ENCODE measurements at regions of chr6 and their contacts with region 1.

Region 1: DNA sequence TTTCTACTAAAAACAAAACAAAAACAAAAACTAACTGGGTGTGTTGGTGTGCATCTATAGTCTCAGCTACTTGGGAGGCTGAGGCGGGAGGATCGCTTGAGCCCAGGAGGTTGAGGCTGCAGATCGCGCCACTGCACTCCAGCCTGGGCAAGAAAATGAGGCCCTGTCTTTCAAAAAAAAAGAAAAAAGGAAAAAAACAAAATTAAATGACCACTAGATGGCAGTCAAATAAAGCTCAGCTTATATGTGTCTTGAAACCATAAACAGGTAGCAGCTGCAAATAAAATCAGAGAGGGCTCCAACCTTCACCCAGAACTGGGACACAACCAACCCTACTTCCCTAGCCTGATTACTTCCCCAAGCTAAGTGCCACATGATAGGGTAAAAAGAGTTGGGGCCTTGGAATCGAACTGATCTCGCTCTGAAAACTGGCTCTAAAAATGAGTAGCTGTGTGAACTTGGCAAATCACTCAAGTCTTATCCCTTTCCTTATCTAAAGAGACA is 67.1 kb upstream of the ADGRF4 start:
- DNase-seq: peak in 2 of 9 experiments; percentile 41 to 57
- ATAC-seq: peak; percentile 59
- H3K4me3 ChIP-seq: no peak overlapping the region
- H3K4me3 Mint-ChIP-seq: no peak overlapping the region
- H3K27ac ChIP-seq: no peak overlapping the region
- H3K27ac Mint-ChIP-seq: peak overlapping the region; percentile 19
- H3K4me1 ChIP-seq: peaks cover 9% of the 10 kb centered on the region
- H3K4me1 Mint-ChIP-seq: peaks cover 23% of the 10 kb centered on the region
- H3K27me3 ChIP-seq: no peaks in the 10 kb centered on the region
- H3K27me3 Mint-ChIP-seq: no peaks in the 10 kb centered on the region
- CTCF ChIP-seq: peak; percentile 67

Region 2: GRCh38 chr6:47392251-47392650 is 239.1 kb before region 1 on chr6:
- CTCF ChIA-PET with region 1: no interaction called
- POLR2A ChIA-PET with region 1: no interaction called
- intact Hi-C with region 1: no loop called
- DNase-seq: no peak
- ATAC-seq: no peak
- H3K4me3 ChIP-seq: no peak overlapping the region
- H3K4me3 Mint-ChIP-seq: no peak overlapping the region
- H3K27ac ChIP-seq: no peak overlapping the region
- H3K27ac Mint-ChIP-seq: no peak overlapping the region
- H3K4me1 ChIP-seq: no peaks in the 10 kb centered on the region
- H3K4me1 Mint-ChIP-seq: no peaks in the 10 kb centered on the region
- H3K27me3 ChIP-seq: peaks cover 0 to 4% of the 10 kb centered on the region in 2 experiments
- H3K27me3 Mint-ChIP-seq: peaks cover 3% of the 10 kb centered on the region
- CTCF ChIP-seq: no peak

Region 3: DNA sequence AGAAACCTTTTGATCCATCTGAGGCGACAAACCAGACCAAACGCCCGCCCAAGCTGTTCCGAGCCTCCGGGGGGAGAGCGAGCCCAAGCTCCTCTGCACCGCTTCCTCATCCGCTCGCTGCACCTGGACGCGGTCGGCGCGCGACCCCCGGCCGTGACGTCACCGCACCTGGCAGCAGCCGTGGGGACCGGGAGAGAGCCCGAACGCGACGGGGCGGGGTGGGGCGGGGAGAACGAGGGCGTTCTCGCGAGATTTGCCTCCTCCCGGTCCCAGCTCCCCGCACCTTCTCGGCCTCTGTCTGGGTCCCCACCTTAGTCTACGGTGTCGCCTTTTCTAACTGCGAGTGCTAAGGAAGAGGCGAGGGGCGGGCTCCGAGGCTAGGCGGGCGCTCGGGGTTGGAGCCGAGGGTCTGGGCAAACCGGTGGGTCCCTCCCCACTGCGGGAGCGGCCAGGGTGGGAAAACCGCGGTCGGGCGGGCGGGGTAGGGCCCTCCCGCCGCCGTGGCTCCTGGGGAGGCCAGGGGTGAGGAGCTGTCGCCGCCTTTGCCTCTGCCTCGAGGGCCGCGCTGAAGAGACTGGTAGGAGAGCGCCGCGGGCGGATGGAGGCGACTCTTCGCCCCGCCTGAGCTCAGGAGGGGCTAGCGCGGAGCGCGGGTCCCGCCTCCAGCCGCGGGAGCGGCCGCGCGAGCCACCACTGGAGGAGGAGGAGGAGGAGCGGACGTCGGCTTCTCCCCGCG is 153.7 kb before region 1 on chr6 and contains the start of gene CD2AP:
- CTCF ChIA-PET with region 1: no interaction called
- POLR2A ChIA-PET with region 1: no interaction called
- intact Hi-C with region 1: loop called in 1 of 2 experiments (anchors 5 kb)
- DNase-seq: peak; percentile 86 to 97 (median 94)
- ATAC-seq: peak; percentile 82
- H3K4me3 ChIP-seq: peak within 1 kb of the TSS; percentile 68 to 76
- H3K4me3 Mint-ChIP-seq: peak within 1 kb of the TSS; percentile 97
- H3K27ac ChIP-seq: peak within 1 kb of the TSS; percentile 89 to 94
- H3K27ac Mint-ChIP-seq: peak within 1 kb of the TSS; percentile 96
- H3K4me1 ChIP-seq: peaks cover 24% of the 10 kb centered on the region
- H3K4me1 Mint-ChIP-seq: peaks cover 46% of the 10 kb centered on the region
- H3K27me3 ChIP-seq: no peaks in the 10 kb centered on the region
- H3K27me3 Mint-ChIP-seq: no peaks in the 10 kb centered on the region
- CTCF ChIP-seq: no peak
- total RNA-seq, gene CD2AP: 43.0 to 51.1 TPM

Region 4: GRCh38 chr6:47567586-47567985 is 63.7 kb before region 1 on chr6:
- CTCF ChIA-PET with region 1: no interaction called
- POLR2A ChIA-PET with region 1: no interaction called
- intact Hi-C with region 1: no loop called
- DNase-seq: no peak
- ATAC-seq: no peak
- H3K4me3 ChIP-seq: no peak overlapping the region
- H3K4me3 Mint-ChIP-seq: no peak overlapping the region
- H3K27ac ChIP-seq: no peak overlapping the region
- H3K27ac Mint-ChIP-seq: no peak overlapping the region
- H3K4me1 ChIP-seq: peaks cover 5% of the 10 kb centered on the region
- H3K4me1 Mint-ChIP-seq: peaks cover 18% of the 10 kb centered on the region
- H3K27me3 ChIP-seq: no peaks in the 10 kb centered on the region
- H3K27me3 Mint-ChIP-seq: no peaks in the 10 kb centered on the region
- CTCF ChIP-seq: no peak

Region 5: GRCh38 chr6:47603995-47604394 is 27.3 kb before region 1 on chr6:
- CTCF ChIA-PET with region 1: interaction called, 10 read pairs
- POLR2A ChIA-PET with region 1: no interaction called
- intact Hi-C with region 1: no loop called
- DNase-seq: no peak
- ATAC-seq: no peak
- H3K4me3 ChIP-seq: no peak overlapping the region
- H3K4me3 Mint-ChIP-seq: no peak overlapping the region
- H3K27ac ChIP-seq: no peak overlapping the region
- H3K27ac Mint-ChIP-seq: no peak overlapping the region
- H3K4me1 ChIP-seq: no peaks in the 10 kb centered on the region
- H3K4me1 Mint-ChIP-seq: no peaks in the 10 kb centered on the region
- H3K27me3 ChIP-seq: no peaks in the 10 kb centered on the region
- H3K27me3 Mint-ChIP-seq: no peaks in the 10 kb centered on the region
- CTCF ChIP-seq: no peak

Region 6: GRCh38 chr6:47733879-47734558 is 102.7 kb after region 1 on chr6:
- CTCF ChIA-PET with region 1: interaction called, 12 read pairs
- POLR2A ChIA-PET with region 1: no interaction called
- intact Hi-C with region 1: loop called (anchors 2 to 5 kb)
- DNase-seq: peak in 2 of 9 experiments; percentile 12 to 42
- ATAC-seq: no peak
- H3K4me3 ChIP-seq: no peak overlapping the region
- H3K4me3 Mint-ChIP-seq: no peak overlapping the region
- H3K27ac ChIP-seq: no peak overlapping the region
- H3K27ac Mint-ChIP-seq: no peak overlapping the region
- H3K4me1 ChIP-seq: no peaks in the 10 kb centered on the region
- H3K4me1 Mint-ChIP-seq: peaks cover 6% of the 10 kb centered on the region
- H3K27me3 ChIP-seq: no peaks in the 10 kb centered on the region
- H3K27me3 Mint-ChIP-seq: peaks cover 3% of the 10 kb centered on the region
- CTCF ChIP-seq: peak; percentile 19

Region 7: DNA sequence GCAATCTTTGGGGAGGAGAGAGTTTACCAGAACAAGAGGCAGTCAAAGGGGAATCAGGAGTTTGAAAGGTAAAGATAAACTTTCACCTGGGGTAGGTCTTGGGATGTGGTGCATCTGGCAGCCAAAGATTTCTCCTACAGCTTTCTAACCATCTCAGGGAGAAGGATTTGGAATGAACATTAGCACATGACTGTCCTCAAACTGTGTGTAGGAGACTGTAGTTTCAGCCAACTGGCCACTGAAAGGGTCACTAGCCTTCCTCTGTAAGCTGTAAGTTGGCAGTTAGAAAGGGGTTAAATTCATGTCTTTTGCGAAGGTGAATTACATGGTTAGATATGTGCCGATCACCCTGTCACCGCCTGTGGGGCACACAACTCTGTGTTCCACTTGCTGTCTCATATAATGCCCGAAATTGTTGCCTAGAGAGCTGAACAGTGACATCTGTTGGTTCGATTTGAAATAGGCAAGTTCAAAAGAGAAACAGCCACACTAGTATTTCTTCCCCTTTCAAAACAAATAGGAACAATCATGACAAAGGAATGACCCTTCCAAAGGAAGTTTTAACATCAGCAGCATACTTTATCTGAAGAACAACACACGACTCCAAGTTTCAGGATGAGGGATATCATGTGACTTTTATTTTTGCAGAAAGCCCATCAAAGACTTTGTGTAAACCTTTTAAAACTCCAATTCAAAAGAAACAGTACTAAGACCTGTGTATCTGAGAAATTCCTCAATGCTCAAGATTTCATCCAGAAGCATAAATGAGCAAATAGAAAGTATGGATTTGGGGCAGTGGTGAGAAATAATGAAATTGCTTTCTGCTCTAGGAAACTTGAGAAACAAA is 149.4 kb after region 1 on chr6:
- CTCF ChIA-PET with region 1: interaction called, 29 read pairs
- POLR2A ChIA-PET with region 1: interaction called, 5 read pairs
- intact Hi-C with region 1: loop called (anchors 1 to 2 kb)
- DNase-seq: peak in 6 of 9 experiments; percentile 7 to 65 (median 41)
- ATAC-seq: peak; percentile 82
- H3K4me3 ChIP-seq: no peak overlapping the region
- H3K4me3 Mint-ChIP-seq: no peak overlapping the region
- H3K27ac ChIP-seq: no peak overlapping the region
- H3K27ac Mint-ChIP-seq: no peak overlapping the region
- H3K4me1 ChIP-seq: no peaks in the 10 kb centered on the region
- H3K4me1 Mint-ChIP-seq: peaks cover 5% of the 10 kb centered on the region
- H3K27me3 ChIP-seq: no peaks in the 10 kb centered on the region
- H3K27me3 Mint-ChIP-seq: peaks cover 2% of the 10 kb centered on the region
- CTCF ChIP-seq: no peak

Region 8: GRCh38 chr6:47787620-47788497 is 156.5 kb after region 1 on chr6:
- CTCF ChIA-PET with region 1: interaction called, 12 read pairs
- POLR2A ChIA-PET with region 1: no interaction called
- intact Hi-C with region 1: no loop called
- DNase-seq: peak; percentile 6 to 64 (median 42)
- ATAC-seq: peak; percentile 83
- H3K4me3 ChIP-seq: no peak overlapping the region
- H3K4me3 Mint-ChIP-seq: no peak overlapping the region
- H3K27ac ChIP-seq: no peak overlapping the region
- H3K27ac Mint-ChIP-seq: no peak overlapping the region
- H3K4me1 ChIP-seq: peaks cover 3% of the 10 kb centered on the region
- H3K4me1 Mint-ChIP-seq: peaks cover 6% of the 10 kb centered on the region
- H3K27me3 ChIP-seq: peaks cover 0 to 8% of the 10 kb centered on the region in 2 experiments
- H3K27me3 Mint-ChIP-seq: peaks cover 34% of the 10 kb centered on the region
- CTCF ChIP-seq: peak; percentile 91

Region 9: GRCh38 chr6:47810885-47811284 is 179.6 kb after region 1 on chr6:
- CTCF ChIA-PET with region 1: no interaction called
- POLR2A ChIA-PET with region 1: no interaction called
- intact Hi-C with region 1: no loop called
- DNase-seq: no peak
- ATAC-seq: no peak
- H3K4me3 ChIP-seq: no peak overlapping the region
- H3K4me3 Mint-ChIP-seq: no peak overlapping the region
- H3K27ac ChIP-seq: no peak overlapping the region
- H3K27ac Mint-ChIP-seq: no peak overlapping the region
- H3K4me1 ChIP-seq: no peaks in the 10 kb centered on the region
- H3K4me1 Mint-ChIP-seq: no peaks in the 10 kb centered on the region
- H3K27me3 ChIP-seq: no peaks in the 10 kb centered on the region
- H3K27me3 Mint-ChIP-seq: peaks cover 24% of the 10 kb centered on the region
- CTCF ChIP-seq: no peak

Region 10: DNA sequence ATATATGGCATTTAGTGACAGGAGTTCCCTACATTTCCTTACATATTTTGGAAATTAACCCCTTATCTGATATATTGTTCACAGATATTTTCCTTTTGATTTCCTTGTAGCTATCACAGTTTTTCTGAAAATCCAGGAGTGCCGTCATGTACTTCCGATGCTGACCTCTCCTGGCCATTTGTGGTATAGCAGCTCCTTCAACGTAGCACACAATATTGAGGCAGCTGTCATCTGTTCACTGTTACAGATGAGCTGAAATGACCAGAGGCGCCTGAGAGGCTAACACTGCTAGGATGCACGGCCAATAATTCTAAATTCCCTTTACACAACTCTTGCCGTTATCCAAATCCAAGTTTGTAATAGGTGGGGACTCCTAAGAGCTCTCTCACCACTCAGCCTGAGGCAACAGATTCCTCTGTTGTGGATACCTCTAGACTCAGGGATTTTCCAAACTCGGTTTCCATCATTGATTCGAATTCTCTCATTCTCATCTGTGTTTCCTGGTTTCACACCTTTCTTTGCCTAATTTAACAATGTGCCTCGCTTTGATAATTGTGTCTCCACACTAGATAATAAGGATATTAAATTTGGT is 1778.7 kb after region 1 on chr6:
- CTCF ChIA-PET with region 1: interaction called, 5 read pairs
- POLR2A ChIA-PET with region 1: no interaction called
- intact Hi-C with region 1: loop called (anchors 2 to 5 kb)
- DNase-seq: peak; percentile 20 to 65 (median 46)
- ATAC-seq: peak; percentile 78
- H3K4me3 ChIP-seq: no peak overlapping the region
- H3K4me3 Mint-ChIP-seq: no peak overlapping the region
- H3K27ac ChIP-seq: no peak overlapping the region
- H3K27ac Mint-ChIP-seq: no peak overlapping the region
- H3K4me1 ChIP-seq: no peaks in the 10 kb centered on the region
- H3K4me1 Mint-ChIP-seq: no peaks in the 10 kb centered on the region
- H3K27me3 ChIP-seq: no peaks in the 10 kb centered on the region
- H3K27me3 Mint-ChIP-seq: peaks cover 17% of the 10 kb centered on the region
- CTCF ChIP-seq: peak; percentile 94

Measured in CD8-positive, alpha-beta T cell (primary cell).